ENCODE measurements at regions of chr6 and their contacts with region 1.

Region 1: DNA sequence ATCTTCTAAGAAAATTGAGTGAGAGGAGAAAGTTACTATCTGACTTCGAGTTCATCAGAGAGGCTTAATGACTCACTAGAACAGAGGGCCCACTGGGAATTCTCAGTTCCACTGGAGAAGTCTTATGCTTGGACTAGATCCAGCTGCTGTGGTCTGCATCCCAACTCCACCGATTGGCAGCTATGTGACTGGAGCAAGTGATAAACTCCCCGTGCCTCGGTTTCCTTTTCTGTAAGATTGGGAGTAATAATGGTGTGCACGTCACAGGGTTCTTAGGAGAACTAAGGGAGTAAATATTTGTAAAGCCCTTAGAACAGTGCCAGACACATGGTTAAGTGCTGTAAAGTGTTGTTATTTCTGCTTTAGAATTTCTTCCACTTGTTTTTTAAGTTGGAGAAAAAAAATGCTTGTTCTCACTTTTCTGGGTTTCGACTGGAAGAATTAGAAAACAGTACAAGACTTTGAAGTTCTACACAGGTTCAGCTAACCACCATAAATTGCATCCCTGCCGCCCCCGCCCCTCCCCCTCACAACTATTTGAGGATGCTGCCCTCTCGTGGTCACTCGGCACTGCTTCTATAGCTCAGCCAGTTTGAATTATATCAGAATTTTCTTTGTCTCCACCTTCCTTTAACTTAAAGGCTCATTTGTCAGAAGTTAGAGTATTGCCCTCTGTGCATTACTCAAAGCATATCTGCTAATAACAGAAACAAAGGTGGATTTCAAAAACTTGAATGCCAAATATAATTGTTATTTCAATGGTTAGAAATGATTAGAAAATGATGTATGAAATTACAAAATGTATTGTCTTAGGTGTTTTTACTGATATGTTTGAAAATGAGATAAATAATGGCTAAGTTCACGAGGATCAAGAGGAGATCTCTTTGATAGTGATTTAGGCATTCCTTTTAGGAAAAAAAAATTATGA is 95.0 kb upstream of the IFNGR1 start:
- DNase-seq: peak; percentile 64
- H3K4me3 ChIP-seq: peak overlapping the region in 1 of 2 experiments; percentile 20; a peak in 1 of 4 replicates
- H3K27ac ChIP-seq: no peak overlapping the region
- H3K4me1 ChIP-seq: peaks cover 0 to 5% of the 10 kb centered on the region in 2 experiments; a peak in 2 of 4 replicates
- H3K27me3 ChIP-seq: no peaks in the 10 kb centered on the region
- CTCF ChIP-seq: peak; percentile 88
- EP300 ChIP-seq: no peak
- RAD21 ChIP-seq: peak; percentile 82

Region 2: DNA sequence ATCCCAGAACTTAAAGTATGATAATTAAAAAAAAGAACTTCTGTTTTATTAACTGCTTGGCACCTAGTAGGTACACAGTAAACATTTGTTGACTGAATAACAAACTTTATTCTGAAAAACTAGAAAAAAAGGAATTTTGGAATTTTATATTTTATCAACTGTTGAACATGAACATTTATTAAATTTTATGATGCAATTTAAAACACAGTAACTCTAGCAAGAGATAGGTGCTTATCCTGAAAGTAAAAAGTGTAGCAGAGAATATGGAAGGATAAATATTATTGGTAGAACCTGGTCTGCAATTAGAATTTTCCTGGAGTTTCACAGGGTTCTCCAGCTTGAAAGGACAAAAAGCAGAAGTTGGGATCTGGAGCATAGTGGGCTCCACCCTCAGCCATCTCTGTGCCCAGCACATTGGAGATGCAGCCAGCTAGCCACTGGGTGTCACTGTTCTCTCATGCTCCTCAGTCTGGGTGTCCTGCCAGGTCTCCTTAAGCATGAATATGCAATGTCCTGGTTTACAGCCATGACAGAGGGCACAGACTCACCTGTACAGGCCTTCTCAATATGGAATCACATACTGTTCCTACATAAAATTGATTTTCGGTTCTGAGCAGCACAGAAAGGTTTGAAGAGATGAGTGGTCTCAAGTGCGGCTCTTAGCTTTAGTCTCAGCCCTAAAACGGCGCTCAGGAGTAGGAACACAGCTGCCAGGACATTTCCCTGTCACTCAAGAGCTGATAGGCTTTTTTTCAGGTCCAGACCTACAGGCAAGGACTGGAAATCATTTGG is 237.7 kb before region 1 on chr6:
- CTCF ChIA-PET with region 1: interaction called, 21 read pairs
- POLR2A ChIA-PET with region 1: no interaction called
- DNase-seq: peak; percentile 65
- H3K4me3 ChIP-seq: no peak overlapping the region; a peak in 1 of 4 replicates
- H3K27ac ChIP-seq: no peak overlapping the region; a peak in 1 of 4 replicates
- H3K4me1 ChIP-seq: no peaks in the 10 kb centered on the region; a peak in 1 of 4 replicates
- H3K27me3 ChIP-seq: no peaks in the 10 kb centered on the region
- CTCF ChIP-seq: peak; percentile 64
- EP300 ChIP-seq: no peak
- RAD21 ChIP-seq: peak; percentile 81

Region 3: DNA sequence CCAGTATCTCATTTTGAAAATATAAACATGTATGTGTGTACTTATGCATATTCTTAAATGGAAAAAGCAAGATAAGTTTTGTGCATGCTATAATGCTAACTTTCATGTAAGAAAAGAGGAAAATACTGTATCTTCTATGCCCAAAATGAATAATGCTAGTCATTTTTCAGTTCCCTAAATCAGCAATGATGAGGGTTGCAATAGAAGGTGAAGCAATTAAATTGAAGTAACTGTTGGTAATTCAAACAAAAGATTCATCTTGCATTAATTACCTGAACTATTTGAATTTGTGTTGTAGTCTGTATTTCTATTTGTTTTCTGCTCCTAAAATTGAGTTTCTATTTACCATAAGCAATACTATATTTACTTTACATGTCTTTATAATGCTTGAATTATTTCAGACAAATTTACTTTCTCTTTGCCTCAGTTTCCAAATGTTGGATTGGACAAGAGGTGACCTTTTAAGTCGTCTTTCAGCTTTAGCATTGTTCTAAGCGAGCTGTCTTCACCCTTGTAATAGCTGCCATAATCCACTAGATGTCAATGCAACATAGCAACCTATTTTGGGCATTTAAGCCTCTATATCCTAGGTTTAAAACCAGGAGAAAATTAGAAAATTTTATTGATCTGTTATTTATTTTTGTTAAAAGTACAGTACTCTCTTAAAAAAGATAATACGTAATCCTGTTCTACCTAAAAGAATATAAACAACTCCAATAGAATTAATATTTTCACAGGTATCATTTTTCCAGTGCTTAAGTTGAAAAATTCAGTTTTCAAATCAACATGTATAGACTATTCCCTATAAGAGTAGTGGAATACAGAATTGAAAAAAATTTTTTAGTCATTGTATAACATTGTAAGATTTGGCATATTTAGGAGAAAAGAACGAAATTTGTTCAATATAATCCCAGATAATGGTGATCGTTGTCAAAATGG is 42.7 kb before region 1 on chr6:
- CTCF ChIA-PET with region 1: interaction called, 27 read pairs
- POLR2A ChIA-PET with region 1: no interaction called
- DNase-seq: peak; percentile 30
- H3K4me3 ChIP-seq: peak overlapping the region in 1 of 2 experiments; percentile 34; a peak in 1 of 4 replicates
- H3K27ac ChIP-seq: no peak overlapping the region
- H3K4me1 ChIP-seq: no peaks in the 10 kb centered on the region
- H3K27me3 ChIP-seq: no peaks in the 10 kb centered on the region; the same call in 1 of the 2 replicates
- CTCF ChIP-seq: peak; percentile 82
- EP300 ChIP-seq: no peak
- RAD21 ChIP-seq: peak; percentile 86

Region 4: DNA sequence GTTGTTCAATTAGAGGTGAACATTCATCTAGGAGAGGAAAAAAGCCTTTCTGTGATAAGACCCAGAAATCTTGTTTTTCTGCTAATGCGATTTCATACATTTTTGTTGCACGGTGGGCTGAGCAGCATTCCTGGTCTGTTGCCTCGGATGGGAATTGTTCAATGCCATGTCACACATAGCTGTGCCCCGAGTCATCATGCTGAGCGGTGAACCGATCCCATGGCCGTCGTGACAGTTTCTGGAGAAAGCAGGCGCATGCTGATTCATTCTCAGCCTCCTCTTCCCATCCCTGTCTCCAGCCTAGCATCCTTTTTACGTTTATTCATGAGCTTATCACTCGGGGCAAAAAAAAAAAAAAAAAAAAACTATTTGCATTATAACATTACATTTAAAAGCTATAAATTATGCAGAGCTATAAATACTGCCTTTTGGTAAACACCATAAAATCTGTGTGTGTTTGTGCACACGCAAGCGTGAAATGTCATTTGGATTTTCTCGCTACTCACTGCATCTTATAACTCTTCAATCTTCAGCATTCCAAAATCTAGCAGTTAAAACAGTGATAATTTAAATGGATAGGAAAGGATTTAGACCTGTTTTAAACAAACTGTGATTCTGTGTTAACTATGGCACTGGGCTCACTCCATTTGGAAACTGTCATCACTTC is 36.1 kb before region 1 on chr6:
- CTCF ChIA-PET with region 1: interaction called, 25 read pairs
- POLR2A ChIA-PET with region 1: no interaction called
- DNase-seq: no peak
- H3K4me3 ChIP-seq: no peak overlapping the region
- H3K27ac ChIP-seq: no peak overlapping the region
- H3K4me1 ChIP-seq: no peaks in the 10 kb centered on the region; a peak in 2 of 4 replicates
- H3K27me3 ChIP-seq: no peaks in the 10 kb centered on the region; the same call in 1 of the 2 replicates
- CTCF ChIP-seq: no peak
- EP300 ChIP-seq: no peak
- RAD21 ChIP-seq: no peak

Region 5: GRCh38 chr6:137297887-137298286 is 16.3 kb before region 1 on chr6:
- CTCF ChIA-PET with region 1: interaction called, 13 read pairs
- POLR2A ChIA-PET with region 1: no interaction called
- DNase-seq: no peak
- H3K4me3 ChIP-seq: no peak overlapping the region
- H3K27ac ChIP-seq: no peak overlapping the region
- H3K4me1 ChIP-seq: no peaks in the 10 kb centered on the region
- H3K27me3 ChIP-seq: no peaks in the 10 kb centered on the region; the same call in 1 of the 2 replicates
- CTCF ChIP-seq: no peak
- EP300 ChIP-seq: no peak
- RAD21 ChIP-seq: no peak